GM10248 (cell line): ENCODE measurements at regions of chr6 and their contacts with region 1.

Region 1: GRCh38 chr6:35202066-35202546 is 11.7 kb upstream of the SCUBE3 start:
- DNase-seq: no peak
- CTCF ChIP-seq: no peak

Region 2: GRCh38 chr6:34459899-34460593 is 742.1 kb before region 1 on chr6:
- CTCF ChIA-PET with region 1: interaction called, 21 read pairs
- POLR2A ChIA-PET with region 1: no interaction called
- DNase-seq: peak; percentile 76
- CTCF ChIP-seq: peak; percentile 75

Region 3: GRCh38 chr6:35165630-35166071 is 36.5 kb before region 1 on chr6:
- CTCF ChIA-PET with region 1: interaction called, 20 read pairs
- POLR2A ChIA-PET with region 1: no interaction called
- DNase-seq: peak; percentile 36
- CTCF ChIP-seq: no peak

Region 4: GRCh38 chr6:35213824-35214756 is 12.0 kb after region 1 on chr6 and contains the start of gene SCUBE3:
- CTCF ChIA-PET with region 1: interaction called, 43 read pairs
- POLR2A ChIA-PET with region 1: no interaction called
- DNase-seq: peak; percentile 68
- CTCF ChIP-seq: no peak

Region 5: DNA sequence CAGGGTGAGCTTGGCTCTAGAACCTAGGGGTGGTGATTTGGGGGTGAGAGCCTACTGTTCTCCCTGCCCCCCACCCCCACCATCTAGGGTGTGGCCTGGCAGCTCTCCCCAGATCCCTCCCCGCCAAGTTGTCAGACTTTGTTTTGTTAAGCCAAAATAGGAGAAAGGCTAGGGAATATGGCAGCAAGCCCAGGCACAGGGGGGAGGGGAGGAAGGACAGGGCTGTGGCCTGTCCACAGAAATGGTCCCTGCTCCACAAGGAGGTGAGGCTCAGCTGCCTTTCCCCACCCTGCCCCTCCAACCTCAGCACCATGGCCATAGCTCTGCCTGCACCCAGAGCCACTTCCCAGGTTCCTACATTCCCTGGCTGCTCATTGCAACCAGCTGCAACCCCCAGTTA is 28.8 kb after region 1 on chr6:
- CTCF ChIA-PET with region 1: interaction called, 91 read pairs
- POLR2A ChIA-PET with region 1: no interaction called
- DNase-seq: no peak
- CTCF ChIP-seq: no peak

Region 6: DNA sequence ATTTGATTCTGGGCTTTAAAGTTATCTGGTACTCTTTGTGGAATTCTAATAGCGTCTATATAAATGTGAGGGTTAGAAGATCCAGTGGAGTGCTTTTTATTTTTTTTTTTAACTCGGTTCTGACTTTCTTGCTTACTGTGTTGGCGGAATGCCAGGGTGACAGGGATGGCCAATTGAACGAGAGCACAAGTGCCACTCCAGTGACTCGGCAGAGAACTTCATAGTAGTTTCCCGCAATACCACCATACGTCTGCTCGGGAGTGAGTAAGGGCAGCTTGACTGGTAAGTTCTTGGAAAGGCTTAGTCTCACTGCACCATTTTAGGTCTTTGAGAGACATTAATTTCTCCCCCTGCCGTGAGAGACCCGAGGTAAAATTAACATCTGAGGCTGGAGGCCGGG is 359.9 kb after region 1 on chr6:
- CTCF ChIA-PET with region 1: no interaction called
- POLR2A ChIA-PET with region 1: no interaction called
- DNase-seq: no peak
- CTCF ChIP-seq: no peak